Left lung (tissue), 14 donors: ENCODE measurements at regions of chr4 and their contacts with region 1.

Region 1: DNA sequence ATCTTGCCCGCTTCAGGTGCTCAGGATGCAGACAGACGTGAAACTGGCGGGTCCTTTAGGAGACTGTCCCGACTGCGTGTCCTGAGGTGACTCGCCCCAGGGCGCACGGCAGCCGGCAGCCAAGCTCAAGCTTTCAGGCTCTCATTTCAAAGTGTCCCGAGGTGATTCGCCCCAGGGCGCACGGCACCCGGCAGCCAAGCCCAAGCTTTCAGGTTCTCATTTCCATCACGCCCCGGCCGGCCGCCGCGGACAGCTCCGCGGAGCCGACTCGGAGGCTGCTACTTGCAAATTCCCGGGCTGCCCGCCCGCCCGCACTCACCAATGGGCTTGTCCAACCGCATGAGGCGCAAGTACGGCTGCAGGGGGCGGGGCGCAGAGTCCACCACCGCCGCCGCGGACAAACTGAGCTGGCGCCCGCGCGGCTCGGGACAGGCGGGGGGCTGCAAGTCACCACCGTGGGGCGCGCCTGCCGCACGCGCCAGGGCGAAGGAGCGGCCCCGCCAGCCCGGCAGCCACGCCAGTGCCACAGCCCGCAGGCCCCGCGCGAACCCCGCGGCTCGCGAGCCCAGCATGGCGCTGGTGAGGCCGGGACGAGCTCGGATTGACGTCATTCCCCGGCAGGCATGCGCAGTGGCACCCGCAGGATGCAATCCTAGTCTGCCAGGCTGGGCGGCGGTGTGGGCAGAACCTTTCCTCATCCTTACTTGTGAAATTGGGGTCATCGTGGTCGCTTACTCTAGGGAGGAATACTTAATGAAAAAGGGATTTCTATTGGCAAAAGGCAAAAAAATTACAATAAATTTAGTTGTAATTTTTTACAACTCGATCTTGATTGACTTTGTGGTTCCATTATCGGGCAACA is at the start of gene COQ2:
- DNase-seq: peak; percentile 95 to 99 (median 96)
- ATAC-seq: peak; percentile 95
- H3K4me3 ChIP-seq: peak within 1 kb of the TSS; percentile 38 to 57
- H3K27ac ChIP-seq: peak within 1 kb of the TSS; percentile 96
- H3K4me1 ChIP-seq: peaks cover 13 to 38% of the 10 kb centered on the region in 2 donors
- H3K27me3 ChIP-seq: no peaks in the 10 kb centered on the region
- CTCF ChIP-seq: peak in 1 of 2 donors; percentile 41
- polyA plus RNA-seq, gene COQ2: 13.0 to 16.4 (median 15.8) TPM

Region 2: GRCh38 chr4:83074086-83074704 is 210.2 kb before region 1 on chr4:
- intact Hi-C with region 1: loop called in 1 of 2 experiments (anchors 10 kb)
- DNase-seq: peak in 2 of 4 donors; percentile 12 to 55
- ATAC-seq: peak; percentile 85
- H3K4me3 ChIP-seq: no peak overlapping the region
- H3K27ac ChIP-seq: no peak overlapping the region
- H3K4me1 ChIP-seq: no peaks in the 10 kb centered on the region
- H3K27me3 ChIP-seq: no peaks in the 10 kb centered on the region
- CTCF ChIP-seq: peak; percentile 53 to 66